Gastrocnemius medialis (tissue), 4 donors: ENCODE measurements at regions of chr12 and their contacts with region 1.

Region 1: DNA sequence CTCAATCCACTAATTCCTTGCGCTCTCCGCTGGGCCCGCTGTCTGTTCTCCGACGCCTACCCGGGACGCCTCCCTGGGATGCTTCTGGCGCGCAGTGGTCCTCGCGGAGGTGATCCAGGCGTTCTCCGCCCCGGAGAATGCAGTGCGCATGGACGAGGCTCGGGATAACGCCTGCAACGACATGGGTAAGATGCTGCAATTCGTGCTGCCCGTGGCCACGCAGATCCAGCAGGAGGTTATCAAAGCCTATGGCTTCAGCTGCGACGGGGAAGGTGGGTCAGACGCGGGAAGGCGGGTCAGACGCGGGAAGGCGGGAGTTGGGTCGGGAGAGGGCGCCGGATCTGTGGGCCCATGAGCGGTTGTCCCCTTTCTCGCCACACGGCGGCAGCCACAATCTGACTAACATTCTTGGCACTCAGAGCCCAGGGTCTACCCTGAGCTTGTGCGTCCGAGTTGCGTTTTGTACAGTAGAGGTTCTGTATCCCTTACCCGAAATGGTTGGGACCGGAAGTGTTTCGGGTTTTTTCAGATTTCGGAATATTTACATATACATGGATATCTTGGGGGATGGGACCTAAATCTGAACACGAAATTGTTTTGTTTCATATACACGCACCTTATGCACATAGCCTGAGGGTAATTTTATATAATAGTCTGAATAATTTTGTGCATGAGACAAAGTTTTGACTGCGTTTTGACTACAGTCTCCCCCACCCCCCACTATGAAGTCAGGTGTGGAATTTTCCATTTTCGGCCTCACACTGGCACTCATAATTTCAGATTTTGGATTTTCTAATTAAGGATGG is 762 bp downstream of the C12orf57 start:
- DNase-seq: peak; percentile 83 to 89
- ATAC-seq: peak; percentile 62 to 66
- H3K4me3 ChIP-seq: peak overlapping the region; percentile 67 to 82 (median 78)
- H3K27ac ChIP-seq: peak overlapping the region; percentile 90 to 94 (median 93)
- H3K4me1 ChIP-seq: peaks cover 13 to 30% of the 10 kb centered on the region in 2 donors
- H3K27me3 ChIP-seq: no peaks in the 10 kb centered on the region
- CTCF ChIP-seq: peak; percentile 89 to 96 (median 92)
- POLR2A ChIP-seq: no peak

Region 2: DNA sequence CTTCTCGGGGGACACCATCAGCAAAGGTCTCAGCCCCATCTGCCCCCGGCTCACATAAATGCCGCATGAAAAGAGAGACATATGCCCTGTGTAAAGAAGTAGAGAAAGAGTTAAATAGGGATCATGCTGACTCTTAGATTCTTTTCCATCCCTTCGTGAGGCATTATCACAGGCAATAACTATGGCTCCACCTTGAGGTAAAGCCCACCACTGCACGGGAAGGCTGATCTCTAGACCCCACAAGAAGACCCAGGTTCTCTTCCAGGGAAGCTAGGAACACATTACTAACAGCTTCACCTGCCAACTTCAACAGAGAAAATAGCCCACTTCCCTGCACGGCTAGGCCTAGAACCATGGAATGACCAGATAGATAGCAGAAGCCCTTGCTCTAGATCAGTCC is 362.4 kb before region 1 on chr12:
- in situ Hi-C with region 1: no loop called
- intact Hi-C with region 1: no loop called
- DNase-seq: no peak
- ATAC-seq: no peak
- H3K4me3 ChIP-seq: no peak overlapping the region
- H3K27ac ChIP-seq: no peak overlapping the region
- H3K4me1 ChIP-seq: no peaks in the 10 kb centered on the region
- H3K27me3 ChIP-seq: no peaks in the 10 kb centered on the region
- CTCF ChIP-seq: no peak
- POLR2A ChIP-seq: no peak

Region 3: GRCh38 chr12:6927379-6928024 is 17.1 kb before region 1 on chr12 and contains the start of gene ATN1:
- in situ Hi-C with region 1: no loop called
- intact Hi-C with region 1: loop called (anchors 1 kb)
- DNase-seq: peak; percentile 60 to 74
- ATAC-seq: peak; percentile 41 to 55
- H3K4me3 ChIP-seq: peak within 1 kb of the TSS; percentile 70 to 92 (median 86)
- H3K27ac ChIP-seq: peak within 1 kb of the TSS; percentile 88 to 98 (median 95)
- H3K4me1 ChIP-seq: peaks cover 44 to 52% of the 10 kb centered on the region in 2 donors
- H3K27me3 ChIP-seq: no peaks in the 10 kb centered on the region
- CTCF ChIP-seq: no peak
- POLR2A ChIP-seq: peak in 1 of 2 donors; percentile 14
- total RNA-seq, gene ATN1: 11.5 to 31.5 (median 26.5) TPM

Region 4: DNA sequence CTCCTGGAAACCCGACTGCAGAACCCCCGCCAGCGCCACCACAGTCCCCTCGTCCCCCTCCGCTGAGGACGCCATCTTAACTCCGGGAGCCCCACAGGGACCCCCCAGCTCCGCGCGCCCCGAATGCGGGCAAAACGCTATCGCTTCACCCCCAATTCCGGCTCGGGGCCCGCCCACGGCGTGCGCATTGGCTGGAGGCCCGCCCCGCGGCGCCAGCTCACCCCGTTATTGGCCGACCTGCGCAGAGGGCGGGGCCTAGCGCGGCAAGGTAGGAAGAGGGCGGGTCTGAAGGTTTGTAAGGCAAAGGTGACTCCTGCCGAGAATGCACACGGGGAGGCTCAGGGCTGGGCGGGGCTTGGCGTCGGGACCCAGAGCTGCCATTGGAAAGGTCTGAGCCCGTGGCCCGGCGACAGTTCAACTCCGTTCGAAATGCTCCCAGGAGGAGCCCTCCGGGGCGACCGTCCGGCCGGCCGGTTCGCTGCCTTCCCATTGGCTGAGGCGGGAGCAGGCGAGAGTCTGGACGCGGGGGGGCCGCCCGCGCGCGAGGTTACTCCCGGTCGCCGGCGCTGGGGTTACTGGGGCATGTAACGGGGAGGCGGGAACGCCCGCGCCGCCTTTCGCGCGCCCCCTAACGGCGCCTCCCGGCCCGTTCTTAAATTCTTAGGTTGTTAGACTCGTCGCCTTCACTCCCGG is 73.9 kb after region 1 on chr12 and contains the start of gene LPCAT3:
- in situ Hi-C with region 1: no loop called
- intact Hi-C with region 1: loop called (anchors 1 kb)
- DNase-seq: peak; percentile 94 to 98
- ATAC-seq: peak; percentile 92 to 95
- H3K4me3 ChIP-seq: peak within 1 kb of the TSS; percentile 81 to 95 (median 84)
- H3K27ac ChIP-seq: peak within 1 kb of the TSS; percentile 91 to 98 (median 95)
- H3K4me1 ChIP-seq: peaks cover 35 to 36% of the 10 kb centered on the region in 2 donors
- H3K27me3 ChIP-seq: no peaks in the 10 kb centered on the region
- CTCF ChIP-seq: peak; percentile 79 to 93 (median 89)
- POLR2A ChIP-seq: peak; percentile 81 to 88
- total RNA-seq, gene LPCAT3: 19.4 to 42.8 (median 36.7) TPM

Region 5: GRCh38 chr12:7092229-7092985 is 147.8 kb after region 1 on chr12 and contains the start of gene C1R:
- in situ Hi-C with region 1: no loop called
- intact Hi-C with region 1: loop called (anchors 5 kb)
- DNase-seq: peak; percentile 50 to 70
- ATAC-seq: peak; percentile 67 to 75
- H3K4me3 ChIP-seq: peak within 1 kb of the TSS; percentile 48 to 78 (median 59)
- H3K27ac ChIP-seq: peak within 1 kb of the TSS; percentile 68 to 80 (median 70)
- H3K4me1 ChIP-seq: peaks cover 8 to 24% of the 10 kb centered on the region in 2 donors
- H3K27me3 ChIP-seq: no peaks in the 10 kb centered on the region
- CTCF ChIP-seq: peak; percentile 75 to 93 (median 88)
- POLR2A ChIP-seq: peak in 1 of 2 donors; percentile 48
- total RNA-seq, gene C1R: 47.5 to 97.8 (median 74.9) TPM